GM10248 (cell line): ENCODE measurements at regions of chr11 and their contacts with region 1.

Region 1: DNA sequence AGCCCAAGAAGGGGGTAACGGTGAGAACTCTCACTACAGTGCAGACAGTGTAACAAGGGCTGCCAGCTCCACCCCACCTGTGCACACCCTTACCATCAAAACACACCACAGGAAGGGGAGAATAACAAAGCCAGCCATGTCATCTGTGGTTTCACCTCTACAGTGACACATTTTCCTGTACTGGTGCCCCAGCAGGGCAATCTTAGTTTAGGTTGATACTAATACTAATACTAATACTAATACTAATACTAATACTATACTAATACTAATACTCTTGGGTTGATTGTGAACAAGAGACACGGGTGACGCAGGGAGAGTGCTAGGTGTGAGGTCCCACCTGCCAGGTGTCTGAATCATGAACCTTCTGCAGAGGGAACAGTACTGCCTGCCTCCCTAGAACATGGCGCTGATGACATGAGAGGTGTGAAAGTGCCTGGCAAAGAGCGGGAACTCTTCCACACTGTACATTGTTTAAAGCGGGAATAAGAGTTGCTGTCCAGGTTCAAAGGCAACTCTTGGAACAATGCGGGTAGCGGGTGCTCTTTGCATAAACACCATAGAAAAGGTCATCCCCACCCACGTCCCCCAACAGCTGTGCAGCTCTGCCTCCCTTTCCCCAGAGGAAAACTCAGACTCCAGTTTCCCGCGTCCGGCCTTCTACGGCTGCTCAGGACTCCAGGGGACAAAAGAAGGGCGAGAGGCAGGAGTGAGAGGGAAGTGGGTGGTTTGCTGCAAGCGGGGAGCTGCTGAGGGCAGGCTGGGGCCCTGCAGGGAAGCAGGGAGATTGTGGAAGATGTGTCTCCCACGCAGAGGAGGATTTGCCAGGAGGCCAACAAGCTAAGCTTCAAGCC is 25.0 kb upstream of the TMPRSS4 start:
- DNase-seq: no peak
- CTCF ChIP-seq: no peak

Region 2: GRCh38 chr11:117634756-117635603 is 416.9 kb before region 1 on chr11:
- CTCF ChIA-PET with region 1: no interaction called
- POLR2A ChIA-PET with region 1: no interaction called
- DNase-seq: no peak
- CTCF ChIP-seq: no peak

Region 3: DNA sequence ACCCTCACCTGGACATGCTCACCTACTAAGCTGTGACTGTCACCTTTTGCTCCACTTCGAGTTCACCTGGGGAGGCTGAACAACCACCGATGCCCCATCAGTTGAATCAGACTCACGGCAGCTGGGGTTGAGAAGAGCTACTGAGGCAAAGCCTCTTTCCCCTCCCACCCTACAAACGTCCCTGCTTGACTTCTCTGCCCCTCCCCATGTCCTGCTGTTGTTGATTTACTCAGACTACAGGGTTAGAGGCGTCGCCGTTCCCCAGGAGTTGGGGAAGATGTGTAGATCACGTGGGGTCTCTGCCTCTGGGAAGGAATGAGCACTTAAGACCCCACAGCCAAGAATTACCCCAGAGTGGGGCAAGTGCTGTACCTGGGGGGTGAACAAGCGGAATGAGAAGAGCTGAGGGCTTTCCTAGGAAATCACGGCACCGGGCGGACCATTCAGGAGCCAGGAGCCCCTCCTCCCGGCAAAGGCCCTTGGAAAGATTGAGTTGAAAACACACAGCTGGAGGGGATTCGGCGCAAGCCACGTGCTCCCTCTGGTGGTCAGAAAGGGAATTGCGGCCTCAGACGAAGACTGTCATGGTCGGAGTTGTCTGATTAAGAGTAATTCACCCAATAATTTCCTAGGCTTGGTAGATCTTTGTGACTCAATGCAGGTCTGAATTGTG is 234.3 kb before region 1 on chr11:
- CTCF ChIA-PET with region 1: interaction called, 78 read pairs
- POLR2A ChIA-PET with region 1: interaction called, 4 read pairs
- DNase-seq: peak; percentile 70
- CTCF ChIP-seq: peak; percentile 96

Region 4: GRCh38 chr11:117843666-117844484 is 208.0 kb before region 1 on chr11:
- CTCF ChIA-PET with region 1: interaction called, 94 read pairs
- POLR2A ChIA-PET with region 1: interaction called, 3 read pairs
- DNase-seq: peak; percentile 71
- CTCF ChIP-seq: peak; percentile 99

Region 5: GRCh38 chr11:117985953-117986887 is 65.6 kb before region 1 on chr11 and contains the start of gene IL10RA:
- CTCF ChIA-PET with region 1: interaction called, 12 read pairs
- POLR2A ChIA-PET with region 1: no interaction called
- DNase-seq: peak; percentile 96
- CTCF ChIP-seq: no peak

Region 6: GRCh38 chr11:118010738-118011461 is 40.9 kb before region 1 on chr11:
- CTCF ChIA-PET with region 1: interaction called, 10 read pairs
- POLR2A ChIA-PET with region 1: no interaction called
- DNase-seq: peak; percentile 90
- CTCF ChIP-seq: no peak

Region 7: GRCh38 chr11:118033443-118033842 is 18.4 kb before region 1 on chr11:
- CTCF ChIA-PET with region 1: interaction called, 14 read pairs
- POLR2A ChIA-PET with region 1: no interaction called
- DNase-seq: no peak
- CTCF ChIP-seq: no peak